Activated CD4-positive, alpha-beta memory T cell treated with anti-CD3 and anti-CD28 coated beads, Interleukin-2, amount 10 ng/mL, durations not matched to agents 7 days and 5 days (primary cell): ENCODE measurements at regions of chr2 and their contacts with region 1.

Region 1: DNA sequence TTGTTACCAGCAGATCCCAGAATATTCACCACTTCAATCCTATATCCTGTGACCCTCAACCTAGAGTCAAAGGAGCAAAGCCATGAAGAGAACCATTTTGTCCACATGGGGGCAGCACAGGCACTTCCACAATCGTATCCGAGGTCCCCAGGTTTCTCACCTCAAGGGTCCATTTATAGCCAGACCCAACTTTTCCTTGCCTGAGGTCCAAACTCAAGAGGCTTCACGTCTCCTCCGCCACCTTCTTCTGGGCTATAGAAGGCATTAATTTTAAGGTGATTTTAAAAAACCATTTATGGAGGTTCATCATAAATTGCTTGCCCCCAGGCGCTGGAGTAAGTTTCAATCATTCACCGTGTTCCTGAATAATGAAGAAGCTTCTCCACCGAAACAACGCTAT is 111.6 kb upstream of the NABP1 start:
- DNase-seq: peak; percentile 67
- H3K4me3 Mint-ChIP-seq: no peak overlapping the region
- H3K27ac Mint-ChIP-seq: no peak overlapping the region
- H3K4me1 Mint-ChIP-seq: peaks cover 49% of the 10 kb centered on the region
- H3K27me3 Mint-ChIP-seq: peaks cover 42% of the 10 kb centered on the region

Region 2: DNA sequence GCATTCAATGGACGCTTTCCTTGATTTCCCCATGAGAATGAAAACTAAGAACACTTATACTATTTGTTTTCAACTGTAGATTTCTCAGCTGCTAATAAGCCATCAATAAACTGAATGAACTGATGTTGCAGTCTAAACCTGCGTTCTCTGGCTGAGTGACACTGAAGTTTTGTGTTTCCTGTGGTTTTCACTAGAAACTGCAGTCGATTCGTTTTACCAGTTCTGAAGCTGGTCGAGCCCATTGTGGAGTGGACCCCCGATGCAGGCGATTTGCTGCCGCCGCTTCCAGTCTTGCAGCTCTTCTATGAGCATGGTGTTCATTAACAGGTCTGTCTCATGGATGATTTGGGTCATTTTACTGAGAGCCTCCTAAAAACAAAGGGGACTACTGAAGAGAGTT is 501.8 kb before region 1 on chr2:
- CTCF ChIA-PET with region 1: no interaction called
- POLR2A ChIA-PET with region 1: no interaction called
- DNase-seq: peak; percentile 83
- H3K4me3 Mint-ChIP-seq: peak overlapping the region; percentile 92
- H3K27ac Mint-ChIP-seq: peak overlapping the region; percentile 96
- H3K4me1 Mint-ChIP-seq: peaks cover 74% of the 10 kb centered on the region
- H3K27me3 Mint-ChIP-seq: no peaks in the 10 kb centered on the region

Region 3: DNA sequence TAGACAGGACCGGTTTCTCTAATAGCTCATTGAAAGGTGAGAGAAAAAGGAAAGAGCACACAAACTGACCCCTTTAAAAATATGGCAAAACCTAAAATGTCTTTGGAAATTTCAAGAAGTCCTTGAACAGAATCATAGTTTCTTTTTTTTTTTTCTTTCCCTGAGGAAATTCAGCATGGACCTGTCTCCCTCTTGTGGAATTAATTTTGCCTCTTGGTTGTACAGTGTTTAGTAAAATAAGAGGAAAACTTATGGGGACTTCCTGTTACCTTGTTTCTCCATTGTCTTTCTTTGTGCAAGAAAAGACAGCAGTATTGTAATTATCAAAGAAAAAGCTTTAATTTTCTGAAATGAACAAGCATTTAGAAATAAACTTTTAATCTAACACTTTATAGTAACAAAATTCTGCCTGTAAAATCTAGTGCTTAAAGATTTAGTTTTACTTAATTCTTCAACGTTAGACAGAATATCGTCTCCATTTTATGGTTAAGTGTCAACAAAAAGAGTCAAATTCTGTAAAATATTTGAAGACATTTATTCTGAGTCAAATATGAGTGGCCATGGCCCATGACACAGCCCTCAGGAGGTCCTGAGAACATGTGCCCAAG is 64.7 kb before region 1 on chr2:
- CTCF ChIA-PET with region 1: no interaction called
- POLR2A ChIA-PET with region 1: no interaction called
- DNase-seq: no peak
- H3K4me3 Mint-ChIP-seq: no peak overlapping the region
- H3K27ac Mint-ChIP-seq: no peak overlapping the region
- H3K4me1 Mint-ChIP-seq: no peaks in the 10 kb centered on the region
- H3K27me3 Mint-ChIP-seq: peaks cover 8% of the 10 kb centered on the region

Region 4: GRCh38 chr2:191555092-191555742 is 11.1 kb before region 1 on chr2:
- CTCF ChIA-PET with region 1: interaction called, 41 read pairs
- POLR2A ChIA-PET with region 1: no interaction called
- DNase-seq: peak; percentile 82
- H3K4me3 Mint-ChIP-seq: no peak overlapping the region
- H3K27ac Mint-ChIP-seq: no peak overlapping the region
- H3K4me1 Mint-ChIP-seq: peaks cover 16% of the 10 kb centered on the region
- H3K27me3 Mint-ChIP-seq: peaks cover 15% of the 10 kb centered on the region

Region 5: GRCh38 chr2:191691016-191691735 is 124.8 kb after region 1 on chr2:
- CTCF ChIA-PET with region 1: interaction called, 36 read pairs
- POLR2A ChIA-PET with region 1: interaction called, 4 read pairs
- DNase-seq: peak; percentile 41
- H3K4me3 Mint-ChIP-seq: no peak overlapping the region
- H3K27ac Mint-ChIP-seq: no peak overlapping the region
- H3K4me1 Mint-ChIP-seq: peaks cover 24% of the 10 kb centered on the region
- H3K27me3 Mint-ChIP-seq: no peaks in the 10 kb centered on the region

Region 6: DNA sequence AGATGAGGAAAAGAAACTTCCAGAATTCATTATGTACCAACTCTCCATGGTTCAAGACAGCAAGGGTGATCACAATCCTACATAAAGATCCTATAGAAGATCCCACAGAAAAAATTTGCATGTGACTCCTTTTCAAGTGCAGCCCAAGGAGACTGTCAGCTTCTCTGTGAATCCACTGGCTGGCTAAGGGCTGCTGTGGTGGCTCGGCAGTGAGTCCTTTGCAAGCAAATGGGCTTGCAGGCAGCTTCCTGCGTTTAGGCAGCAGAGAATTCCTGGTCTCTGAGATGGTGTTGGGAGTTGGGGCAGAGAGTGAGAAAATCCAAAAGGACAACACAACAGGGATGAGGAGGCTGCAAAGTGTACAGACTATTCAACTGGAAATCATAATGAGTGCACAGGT is 155.0 kb after region 1 on chr2:
- CTCF ChIA-PET with region 1: no interaction called
- POLR2A ChIA-PET with region 1: no interaction called
- DNase-seq: no peak
- H3K4me3 Mint-ChIP-seq: no peak overlapping the region
- H3K27ac Mint-ChIP-seq: no peak overlapping the region
- H3K4me1 Mint-ChIP-seq: no peaks in the 10 kb centered on the region
- H3K27me3 Mint-ChIP-seq: peaks cover 1% of the 10 kb centered on the region